Colonic mucosa (tissue), 4 donors: ENCODE measurements at regions of chr2 and their contacts with region 1.

Region 1: GRCh38 chr2:101387151-101387807 is at the start of gene CREG2:
- DNase-seq: peak; percentile 27
- H3K4me3 ChIP-seq: peak within 1 kb of the TSS; percentile 29
- H3K27ac ChIP-seq: no peak within 1 kb of the TSS
- H3K4me1 ChIP-seq: peaks cover 4% of the 10 kb centered on the region
- H3K27me3 ChIP-seq: peaks cover 30% of the 10 kb centered on the region
- CTCF ChIP-seq: peak; percentile 31
- total RNA-seq, gene CREG2: 0.56 TPM in 1 of 2 donors, not detected in the other

Region 2: DNA sequence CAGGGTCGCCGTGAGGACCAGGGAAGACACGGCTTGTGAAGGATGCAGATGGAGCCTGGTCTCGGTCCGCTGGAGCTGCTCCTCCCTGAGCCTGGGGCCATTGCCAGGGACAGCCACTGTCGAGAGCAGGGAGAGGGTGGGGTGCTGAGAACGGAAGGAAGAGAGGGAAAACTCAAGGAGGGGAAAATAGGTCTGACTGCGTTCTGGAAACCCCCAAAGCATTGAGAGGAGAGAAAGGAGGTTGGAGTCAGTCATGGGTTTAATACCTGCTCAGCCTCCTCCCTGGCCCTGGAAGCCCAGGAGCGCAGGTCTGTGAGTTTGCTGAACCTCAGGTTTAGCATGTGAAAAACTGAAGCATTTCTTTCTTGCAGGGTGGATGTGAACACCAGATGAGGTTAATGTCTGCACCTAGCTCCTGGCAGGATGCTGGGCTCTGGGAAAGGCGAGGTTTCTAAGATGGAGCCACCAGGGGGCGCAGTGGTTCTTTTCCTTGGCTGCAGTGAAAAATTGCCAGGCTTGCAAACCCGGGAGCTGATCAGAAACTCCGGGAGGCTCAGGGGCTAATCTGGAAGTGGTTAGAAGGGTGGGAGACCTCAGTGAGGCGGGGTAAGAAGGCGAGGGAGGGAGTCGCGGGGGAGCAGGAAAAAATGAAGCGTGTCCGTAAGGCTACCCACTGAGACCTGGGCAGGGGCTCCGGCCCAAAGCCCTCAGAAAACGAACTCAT is 45.2 kb before region 1 on chr2:
- intact Hi-C with region 1: loop called (anchors 5 kb)
- DNase-seq: peak; percentile 80
- H3K4me3 ChIP-seq: no peak overlapping the region
- H3K27ac ChIP-seq: no peak overlapping the region
- H3K4me1 ChIP-seq: no peaks in the 10 kb centered on the region
- H3K27me3 ChIP-seq: no peaks in the 10 kb centered on the region
- CTCF ChIP-seq: peak; percentile 70